ENCODE measurements at regions of chr1 and their contacts with region 1.

Region 1: GRCh38 chr1:88683541-88684481 is at the start of gene PKN2:
- DNase-seq: peak; percentile 99
- H3K4me3 ChIP-seq: peak within 1 kb of the TSS; percentile 83 to 97 (median 90)
- H3K27ac ChIP-seq: peak within 1 kb of the TSS; percentile 90
- H3K4me1 ChIP-seq: peaks cover 5% of the 10 kb centered on the region
- H3K27me3 ChIP-seq: no peaks in the 10 kb centered on the region
- CTCF ChIP-seq: peak in 1 of 2 donors; percentile 41
- total RNA-seq, gene PKN2: 34.3 to 41.9 TPM

Region 2: GRCh38 chr1:87335175-87335884 is 1348.5 kb before region 1 on chr1:
- CTCF ChIA-PET with region 1: no interaction called
- dilution Hi-C with region 1: no loop called
- in situ Hi-C with region 1: no loop called
- intact Hi-C with region 1: loop called (anchors 10 kb)
- DNase-seq: peak; percentile 42
- H3K4me3 ChIP-seq: peak overlapping the region; percentile 40 to 72 (median 47)
- H3K27ac ChIP-seq: peak overlapping the region; percentile 29
- H3K4me1 ChIP-seq: peaks cover 27% of the 10 kb centered on the region
- H3K27me3 ChIP-seq: no peaks in the 10 kb centered on the region
- CTCF ChIP-seq: peak in 1 of 2 donors; percentile 3

Region 3: GRCh38 chr1:88529581-88529980 is 154.2 kb before region 1 on chr1:
- CTCF ChIA-PET with region 1: no interaction called
- dilution Hi-C with region 1: no loop called
- in situ Hi-C with region 1: no loop called
- intact Hi-C with region 1: no loop called
- DNase-seq: no peak
- H3K4me3 ChIP-seq: no peak overlapping the region
- H3K27ac ChIP-seq: no peak overlapping the region
- H3K4me1 ChIP-seq: no peaks in the 10 kb centered on the region
- H3K27me3 ChIP-seq: no peaks in the 10 kb centered on the region
- CTCF ChIP-seq: no peak

Region 4: GRCh38 chr1:88608139-88608943 is 75.5 kb before region 1 on chr1:
- CTCF ChIA-PET with region 1: no interaction called
- dilution Hi-C with region 1: loop called (anchors 5 kb)
- in situ Hi-C with region 1: no loop called
- intact Hi-C with region 1: loop called (anchors 1 kb)
- DNase-seq: peak; percentile 28
- H3K4me3 ChIP-seq: no peak overlapping the region
- H3K27ac ChIP-seq: no peak overlapping the region
- H3K4me1 ChIP-seq: peaks cover 9% of the 10 kb centered on the region
- H3K27me3 ChIP-seq: no peaks in the 10 kb centered on the region
- CTCF ChIP-seq: peak; percentile 74 to 76

Region 5: DNA sequence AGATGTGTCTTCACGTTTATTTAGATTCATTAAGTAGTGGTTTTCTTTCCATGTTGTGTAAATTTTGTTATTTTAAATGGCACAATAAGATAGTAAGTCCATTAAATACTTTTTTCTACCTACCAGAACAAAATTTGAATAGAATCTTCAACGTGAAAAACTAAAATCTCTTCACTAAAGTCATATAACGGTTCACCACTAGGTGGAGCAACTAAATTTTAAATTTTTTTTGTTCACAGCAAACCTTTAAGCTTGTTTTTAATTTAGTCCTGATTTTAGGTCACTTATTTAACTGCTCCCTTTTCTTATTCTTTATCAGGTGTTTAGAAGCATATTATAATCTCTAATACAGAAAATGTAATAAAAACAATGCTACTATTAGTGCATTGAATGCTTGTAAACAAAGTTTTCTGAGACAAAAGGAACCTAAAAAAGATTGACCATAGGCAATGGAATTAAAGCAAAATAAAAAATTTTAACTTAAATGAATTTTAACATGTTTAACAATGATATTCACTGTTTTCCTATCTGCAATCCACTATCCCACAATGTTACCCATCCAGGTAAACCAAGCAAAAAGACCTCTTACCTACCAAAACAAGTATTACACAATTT is 28.0 kb before region 1 on chr1:
- CTCF ChIA-PET with region 1: interaction called, 5 read pairs
- dilution Hi-C with region 1: no loop called
- in situ Hi-C with region 1: no loop called
- intact Hi-C with region 1: loop called (anchors 1 kb)
- DNase-seq: no peak
- H3K4me3 ChIP-seq: no peak overlapping the region
- H3K27ac ChIP-seq: no peak overlapping the region
- H3K4me1 ChIP-seq: no peaks in the 10 kb centered on the region
- H3K27me3 ChIP-seq: no peaks in the 10 kb centered on the region
- CTCF ChIP-seq: peak; percentile 53

Region 6: DNA sequence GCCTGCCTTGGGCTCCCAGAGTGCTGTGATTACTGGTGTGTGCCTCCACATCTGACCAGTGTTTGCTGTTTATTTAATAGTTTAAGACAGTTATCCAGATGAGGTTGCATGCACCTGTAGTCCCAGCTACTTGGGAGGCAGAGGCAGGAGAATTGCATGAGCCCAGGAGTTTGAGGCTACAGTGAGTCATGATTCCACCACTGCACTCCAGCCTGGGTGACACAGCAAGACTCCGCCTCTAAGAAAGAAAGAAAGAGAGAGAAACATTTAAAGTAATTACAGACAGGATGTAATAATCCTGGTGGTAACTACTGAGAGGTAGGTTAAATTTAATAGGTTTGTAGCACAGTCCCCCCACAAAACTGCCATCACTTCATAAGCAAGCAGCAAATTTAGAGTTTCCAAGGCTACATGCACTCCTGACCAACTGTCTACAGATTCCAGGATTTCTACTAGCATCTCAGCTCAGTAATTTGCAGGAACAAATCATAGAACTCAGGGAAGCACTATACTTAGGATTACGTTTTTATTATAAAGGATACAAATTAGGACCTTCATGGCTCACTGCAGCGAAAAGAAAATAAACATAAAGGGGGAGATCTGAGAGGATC is 89.8 kb after region 1 on chr1:
- CTCF ChIA-PET with region 1: no interaction called
- dilution Hi-C with region 1: no loop called
- in situ Hi-C with region 1: no loop called
- intact Hi-C with region 1: loop called (anchors 1 kb)
- DNase-seq: peak; percentile 88
- H3K4me3 ChIP-seq: peak overlapping the region in 1 of 3 experiments; percentile 1
- H3K27ac ChIP-seq: peak overlapping the region; percentile 99
- H3K4me1 ChIP-seq: peaks cover 21% of the 10 kb centered on the region
- H3K27me3 ChIP-seq: no peaks in the 10 kb centered on the region
- CTCF ChIP-seq: no peak

Region 7: GRCh38 chr1:88867743-88868521 is 184.1 kb after region 1 on chr1:
- CTCF ChIA-PET with region 1: no interaction called
- dilution Hi-C with region 1: no loop called
- in situ Hi-C with region 1: no loop called
- intact Hi-C with region 1: no loop called
- DNase-seq: no peak
- H3K4me3 ChIP-seq: no peak overlapping the region
- H3K27ac ChIP-seq: no peak overlapping the region
- H3K4me1 ChIP-seq: no peaks in the 10 kb centered on the region
- H3K27me3 ChIP-seq: no peaks in the 10 kb centered on the region
- CTCF ChIP-seq: no peak

Region 8: DNA sequence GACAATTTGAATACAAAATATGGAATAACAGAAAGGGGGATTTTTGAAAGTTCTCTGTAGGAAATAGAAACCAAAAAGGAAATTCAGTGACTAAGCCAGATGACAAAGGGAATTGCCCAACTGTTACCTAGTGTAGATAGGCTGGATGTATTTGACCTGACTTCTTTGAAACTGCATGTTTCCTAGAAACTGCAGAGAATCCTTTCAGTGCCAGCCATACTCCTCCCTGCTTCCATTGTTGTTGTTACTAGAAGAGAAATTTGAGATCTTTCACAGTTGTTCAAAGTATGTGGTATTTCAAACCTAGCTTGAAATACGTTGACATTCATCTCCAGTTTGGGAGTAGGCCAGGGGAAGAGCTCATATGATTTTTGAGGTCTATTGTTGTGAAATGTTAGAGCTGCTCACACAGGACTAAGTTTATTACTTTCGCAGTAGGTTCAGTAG is 590.6 kb after region 1 on chr1:
- CTCF ChIA-PET with region 1: no interaction called
- dilution Hi-C with region 1: no loop called
- in situ Hi-C with region 1: no loop called
- intact Hi-C with region 1: no loop called
- DNase-seq: peak; percentile 79
- H3K4me3 ChIP-seq: no peak overlapping the region
- H3K27ac ChIP-seq: no peak overlapping the region
- H3K4me1 ChIP-seq: peaks cover 6% of the 10 kb centered on the region
- H3K27me3 ChIP-seq: no peaks in the 10 kb centered on the region
- CTCF ChIP-seq: no peak

Measured in mammary epithelial cell (primary cell).